ENCODE measurements at regions of chr7 and their contacts with region 1.

Region 1: DNA sequence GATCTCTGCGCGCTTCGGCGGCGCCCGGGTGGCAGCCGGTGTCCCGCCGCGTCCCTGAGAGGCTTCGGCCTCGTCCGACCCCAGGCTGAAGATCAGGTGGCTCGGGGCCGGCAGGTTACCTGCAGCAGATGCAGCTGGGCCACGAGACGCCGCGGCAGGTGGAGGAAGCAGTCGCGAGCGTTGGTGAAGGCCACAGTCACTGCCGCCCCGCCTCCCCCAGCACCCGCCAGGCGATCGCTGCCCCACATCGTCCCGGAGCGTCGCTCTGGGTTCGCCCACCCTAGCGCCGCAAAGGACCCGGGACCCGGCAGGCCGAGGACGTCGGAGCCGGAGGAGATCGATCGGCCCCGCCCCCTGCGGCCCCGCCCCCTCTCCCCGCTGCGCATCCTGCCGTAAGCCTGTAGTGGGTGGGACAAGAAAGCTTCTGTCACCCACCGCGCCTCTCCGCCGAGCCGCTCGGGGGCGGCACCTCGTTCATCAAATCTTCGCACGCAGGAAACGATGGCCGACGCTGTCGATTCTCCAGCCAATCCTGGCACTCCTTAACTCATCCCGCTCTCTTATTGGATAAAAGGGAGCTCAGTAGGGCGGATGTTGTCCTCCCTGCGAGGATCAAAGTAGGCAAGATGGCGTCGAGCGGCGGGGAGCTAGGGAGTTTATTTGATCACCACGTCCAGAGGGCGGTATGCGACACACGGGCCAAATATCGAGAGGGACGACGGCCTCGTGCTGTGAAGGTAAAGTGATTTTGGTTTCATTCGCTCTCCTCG is at the starts of genes PEX1 and RBM48:
- DNase-seq: peak; percentile 96
- H3K4me3 Mint-ChIP-seq: peak within 1 kb of the TSS; percentile 92
- H3K27ac Mint-ChIP-seq: peak within 1 kb of the TSS; percentile 95
- H3K4me1 Mint-ChIP-seq: peaks cover 20% of the 10 kb centered on the region
- H3K27me3 Mint-ChIP-seq: no peaks in the 10 kb centered on the region
- total RNA-seq, gene PEX1: 15.1 TPM in 2 replicates
- total RNA-seq, gene RBM48: 15.2 and 16.8 TPM in 2 replicates

Region 2: GRCh38 chr7:91940572-91941341 is 587.6 kb before region 1 on chr7 and contains the start of gene AKAP9:
- intact Hi-C with region 1: loop called (anchors 10 kb)
- DNase-seq: peak; percentile 87
- H3K4me3 Mint-ChIP-seq: peak within 1 kb of the TSS; percentile 88
- H3K27ac Mint-ChIP-seq: peak within 1 kb of the TSS; percentile 93
- H3K4me1 Mint-ChIP-seq: peaks cover 28% of the 10 kb centered on the region
- H3K27me3 Mint-ChIP-seq: peaks cover 6% of the 10 kb centered on the region
- total RNA-seq, gene AKAP9: 36.2 and 38.3 TPM in 2 replicates

Region 3: GRCh38 chr7:92134271-92135051 is 393.9 kb before region 1 on chr7 and contains the start of gene CYP51A1:
- intact Hi-C with region 1: loop called (anchors 1 kb)
- DNase-seq: peak; percentile 92
- H3K4me3 Mint-ChIP-seq: peak within 1 kb of the TSS; percentile 99
- H3K27ac Mint-ChIP-seq: peak within 1 kb of the TSS; percentile 99
- H3K4me1 Mint-ChIP-seq: peaks cover 41% of the 10 kb centered on the region
- H3K27me3 Mint-ChIP-seq: no peaks in the 10 kb centered on the region
- total RNA-seq, gene CYP51A1: 133 and 139 TPM in 2 replicates

Region 4: GRCh38 chr7:92245487-92246362 is 282.6 kb before region 1 on chr7 and contains the starts of genes ANKIB1 and KRIT1:
- intact Hi-C with region 1: loop called (anchors 1 kb)
- DNase-seq: peak; percentile 83
- H3K4me3 Mint-ChIP-seq: peak within 1 kb of the TSS; percentile 100
- H3K27ac Mint-ChIP-seq: peak within 1 kb of the TSS; percentile 100
- H3K4me1 Mint-ChIP-seq: peaks cover 30% of the 10 kb centered on the region
- H3K27me3 Mint-ChIP-seq: no peaks in the 10 kb centered on the region
- total RNA-seq, gene ANKIB1: 50.4 and 55.0 TPM in 2 replicates
- total RNA-seq, gene KRIT1: 37.4 and 43.0 TPM in 2 replicates

Region 5: GRCh38 chr7:92590711-92591310 is 62.4 kb after region 1 on chr7:
- intact Hi-C with region 1: loop called (anchors 1 kb)
- DNase-seq: no peak
- H3K4me3 Mint-ChIP-seq: peak overlapping the region; percentile 93
- H3K27ac Mint-ChIP-seq: no peak overlapping the region
- H3K4me1 Mint-ChIP-seq: peaks cover 41% of the 10 kb centered on the region
- H3K27me3 Mint-ChIP-seq: no peaks in the 10 kb centered on the region

Region 6: DNA sequence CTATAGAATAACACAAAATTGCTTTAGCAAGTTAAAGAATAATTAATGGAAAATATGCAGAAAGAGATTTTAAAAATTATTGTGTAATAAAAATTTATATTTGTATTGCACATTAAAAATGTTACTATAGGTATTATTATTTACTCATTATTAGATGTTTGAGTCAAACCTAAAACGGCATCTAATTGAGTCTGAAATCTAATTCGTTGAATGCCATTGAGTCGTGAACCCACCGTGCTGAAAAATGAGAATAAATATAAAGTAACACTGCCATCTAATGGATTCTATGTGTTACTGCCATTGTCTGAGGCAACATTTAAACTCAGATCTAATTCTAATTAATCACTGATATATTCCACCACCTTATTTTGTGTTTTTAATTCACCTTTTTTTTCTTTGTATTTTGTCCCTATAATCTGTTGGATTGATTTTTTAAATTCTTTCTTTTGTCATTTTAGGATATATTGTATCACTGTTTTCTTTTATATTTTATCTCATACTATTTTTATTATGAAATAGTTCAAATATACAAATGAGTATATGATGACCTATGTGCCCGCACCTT is 527.3 kb after region 1 on chr7:
- intact Hi-C with region 1: loop called (anchors 5 kb)
- DNase-seq: no peak
- H3K4me3 Mint-ChIP-seq: no peak overlapping the region
- H3K27ac Mint-ChIP-seq: no peak overlapping the region
- H3K4me1 Mint-ChIP-seq: peaks cover 21% of the 10 kb centered on the region
- H3K27me3 Mint-ChIP-seq: no peaks in the 10 kb centered on the region

Region 7: GRCh38 chr7:93117852-93118530 is 589.6 kb after region 1 on chr7 and contains the start of gene SAMD9:
- intact Hi-C with region 1: loop called (anchors 1 kb)
- DNase-seq: peak; percentile 58
- H3K4me3 Mint-ChIP-seq: peak within 1 kb of the TSS; percentile 85
- H3K27ac Mint-ChIP-seq: peak within 1 kb of the TSS; percentile 90
- H3K4me1 Mint-ChIP-seq: peaks cover 38% of the 10 kb centered on the region
- H3K27me3 Mint-ChIP-seq: no peaks in the 10 kb centered on the region
- total RNA-seq, gene SAMD9: 9.3 and 9.4 TPM in 2 replicates